ENCODE measurements at regions of chr2 and their contacts with region 1.

Region 1: GRCh38 chr2:207930747-207931146 is 94.6 kb downstream of the PLEKHM3 start:
- DNase-seq: peak; percentile 86 to 89
- H3K4me3 ChIP-seq: peak overlapping the region; percentile 19
- H3K4me3 Mint-ChIP-seq: peak overlapping the region; percentile 79
- H3K27ac Mint-ChIP-seq: peak overlapping the region; percentile 87
- H3K4me1 ChIP-seq: peaks cover 77% of the 10 kb centered on the region
- H3K4me1 Mint-ChIP-seq: peaks cover 40% of the 10 kb centered on the region
- H3K27me3 ChIP-seq: no peaks in the 10 kb centered on the region
- H3K27me3 Mint-ChIP-seq: no peaks in the 10 kb centered on the region
- CTCF ChIP-seq: peak in 1 of 2 experiments; percentile 23

Region 2: GRCh38 chr2:207710814-207711740 is 219.7 kb before region 1 on chr2 and contains the start of gene CCNYL1:
- CTCF ChIA-PET with region 1: no interaction called
- POLR2A ChIA-PET with region 1: no interaction called
- intact Hi-C with region 1: no loop called
- DNase-seq: peak; percentile 100
- H3K4me3 ChIP-seq: peak within 1 kb of the TSS; percentile 83
- H3K4me3 Mint-ChIP-seq: peak within 1 kb of the TSS; percentile 96
- H3K27ac Mint-ChIP-seq: peak within 1 kb of the TSS; percentile 88
- H3K4me1 ChIP-seq: peaks cover 14% of the 10 kb centered on the region; the same call in 1 of the 2 replicates
- H3K4me1 Mint-ChIP-seq: peaks cover 6% of the 10 kb centered on the region
- H3K27me3 ChIP-seq: no peaks in the 10 kb centered on the region
- H3K27me3 Mint-ChIP-seq: no peaks in the 10 kb centered on the region
- CTCF ChIP-seq: peak in 1 of 2 experiments; percentile 20
- total RNA-seq, gene CCNYL1: 39.4 and 40.7 TPM in 2 replicates

Region 3: GRCh38 chr2:207912665-207913064 is 18.1 kb before region 1 on chr2:
- CTCF ChIA-PET with region 1: no interaction called
- POLR2A ChIA-PET with region 1: no interaction called
- intact Hi-C with region 1: loop called (anchors 2 kb)
- DNase-seq: peak in 1 of 2 experiments; percentile 33
- H3K4me3 ChIP-seq: no peak overlapping the region
- H3K4me3 Mint-ChIP-seq: peak overlapping the region; percentile 21
- H3K27ac Mint-ChIP-seq: peak overlapping the region; percentile 91
- H3K4me1 ChIP-seq: peaks cover 23% of the 10 kb centered on the region
- H3K4me1 Mint-ChIP-seq: peaks cover 22% of the 10 kb centered on the region
- H3K27me3 ChIP-seq: no peaks in the 10 kb centered on the region
- H3K27me3 Mint-ChIP-seq: no peaks in the 10 kb centered on the region
- CTCF ChIP-seq: no peak

Measured in Caco-2 (cell line).